AG04450 (cell line): ENCODE measurements at regions of chr15 and their contacts with region 1.

Region 1: DNA sequence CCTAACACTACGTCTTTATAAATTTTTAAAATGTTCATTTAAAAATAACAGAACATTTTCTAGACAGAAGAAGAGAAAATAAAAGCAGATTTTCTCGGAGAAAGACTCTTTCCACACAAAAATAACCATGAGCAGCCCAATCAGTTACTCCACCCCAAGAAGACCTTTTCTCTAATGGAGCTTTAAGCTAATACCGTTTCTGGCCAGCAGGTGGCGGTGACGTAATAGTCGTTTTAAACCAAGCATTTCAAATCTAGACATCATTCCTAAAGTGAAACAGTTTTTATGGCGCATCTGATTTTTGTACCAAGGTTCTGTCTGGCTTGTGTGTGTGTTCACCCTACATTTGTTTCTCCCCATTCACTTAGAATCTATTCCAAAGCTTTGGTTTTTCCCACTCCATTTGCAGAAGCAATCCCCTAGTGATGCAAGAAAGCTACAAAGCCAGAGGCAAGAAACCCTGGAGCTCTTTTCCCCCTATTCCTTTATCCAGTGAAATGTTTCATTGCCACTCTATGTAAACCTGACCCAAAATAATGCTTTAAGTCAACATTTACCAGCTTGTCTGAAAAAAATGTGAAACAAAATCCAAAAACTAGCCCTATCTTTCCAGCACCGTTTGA is 336.7 kb upstream of the IGF1R start:
- DNase-seq: peak; percentile 33
- H3K4me3 ChIP-seq: no peak overlapping the region
- H3K27ac ChIP-seq: no peak overlapping the region
- H3K27me3 ChIP-seq: no peaks in the 10 kb centered on the region
- CTCF ChIP-seq: peak; percentile 78

Region 2: GRCh38 chr15:97224191-97224641 is 1087.5 kb before region 1 on chr15:
- CTCF ChIA-PET with region 1: no interaction called
- POLR2A ChIA-PET with region 1: no interaction called
- DNase-seq: no peak
- H3K4me3 ChIP-seq: no peak overlapping the region
- H3K27ac ChIP-seq: no peak overlapping the region
- H3K27me3 ChIP-seq: no peaks in the 10 kb centered on the region
- CTCF ChIP-seq: no peak

Region 3: GRCh38 chr15:98421419-98422129 is 109.9 kb after region 1 on chr15:
- CTCF ChIA-PET with region 1: interaction called, 78 read pairs
- POLR2A ChIA-PET with region 1: no interaction called
- DNase-seq: no peak
- H3K4me3 ChIP-seq: peak overlapping the region; percentile 20; the same call in 1 of the 2 replicates
- H3K27ac ChIP-seq: no peak overlapping the region
- H3K27me3 ChIP-seq: peaks cover 36% of the 10 kb centered on the region
- CTCF ChIP-seq: peak; percentile 85

Region 4: DNA sequence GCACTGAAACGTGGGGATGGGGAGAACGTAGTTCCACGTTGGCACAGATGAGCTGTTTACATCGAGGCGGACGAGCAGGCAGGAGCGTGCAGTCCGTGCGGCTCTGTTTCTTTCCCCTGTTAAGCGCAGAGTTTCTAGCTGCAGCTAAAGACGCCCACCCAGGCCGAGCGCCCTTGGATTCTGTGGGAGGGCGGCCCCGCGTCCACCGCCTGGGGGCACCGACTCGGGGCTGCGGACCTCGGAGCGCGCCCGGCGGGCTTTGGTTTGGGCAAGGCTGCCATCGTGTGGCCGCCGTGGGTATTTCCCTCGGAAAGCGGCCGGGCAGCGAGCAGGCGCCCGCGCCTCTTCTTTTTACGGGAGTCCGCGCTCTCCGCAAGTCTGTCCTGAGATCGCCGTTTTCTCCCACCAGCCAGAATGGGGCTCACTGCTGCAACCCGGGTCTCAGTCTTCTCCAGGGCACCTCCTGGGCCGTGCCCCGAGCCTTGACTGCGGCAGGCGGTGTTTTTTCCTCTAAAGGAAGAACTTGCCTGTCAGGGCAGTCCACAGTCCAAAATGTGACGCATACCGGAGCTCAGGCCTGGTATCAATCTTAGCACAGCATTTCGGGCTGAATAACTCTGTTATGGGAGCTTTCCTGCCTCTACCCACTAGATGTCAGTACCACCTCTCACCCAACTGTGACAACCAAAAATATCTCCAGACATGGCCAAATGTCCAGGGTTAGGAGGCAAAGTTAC is 116.7 kb after region 1 on chr15:
- CTCF ChIA-PET with region 1: interaction called, 43 read pairs
- POLR2A ChIA-PET with region 1: no interaction called
- DNase-seq: no peak
- H3K4me3 ChIP-seq: peak overlapping the region; percentile 50
- H3K27ac ChIP-seq: no peak overlapping the region
- H3K27me3 ChIP-seq: peaks cover 9% of the 10 kb centered on the region
- CTCF ChIP-seq: peak; percentile 69